BJ (cell line): ENCODE measurements at regions of chr12 and their contacts with region 1.

Region 1: DNA sequence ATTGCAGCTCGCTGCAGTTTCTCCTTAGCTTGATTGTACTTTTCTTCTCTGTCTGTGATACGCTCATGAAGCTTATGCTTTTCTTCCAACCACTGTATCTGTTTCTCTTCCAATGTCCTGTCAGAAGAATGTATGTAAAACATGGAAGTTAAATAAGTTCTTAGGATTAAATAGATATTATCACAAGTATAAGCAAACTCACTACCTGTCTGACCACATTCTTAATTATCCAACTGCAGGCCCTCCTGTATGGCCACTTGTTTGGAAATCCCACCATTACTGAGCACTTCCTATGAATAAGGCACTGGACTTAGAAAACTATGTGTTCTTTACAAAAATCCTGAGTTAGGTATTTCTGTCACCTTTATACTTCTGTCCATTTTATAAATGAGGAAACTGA is 128.0 kb downstream of the CEP83 start:
- DNase-seq: no peak
- H3K4me3 ChIP-seq: no peak overlapping the region
- H3K27me3 ChIP-seq: no peaks in the 10 kb centered on the region
- CTCF ChIP-seq: no peak

Region 2: GRCh38 chr12:94167756-94168416 is 163.8 kb before region 1 on chr12:
- CTCF ChIA-PET with region 1: no interaction called
- POLR2A ChIA-PET with region 1: interaction called, 15 read pairs
- DNase-seq: no peak
- H3K4me3 ChIP-seq: no peak overlapping the region
- H3K27me3 ChIP-seq: peaks cover 8% of the 10 kb centered on the region; the same call in 1 of the 2 replicates
- CTCF ChIP-seq: no peak

Region 3: DNA sequence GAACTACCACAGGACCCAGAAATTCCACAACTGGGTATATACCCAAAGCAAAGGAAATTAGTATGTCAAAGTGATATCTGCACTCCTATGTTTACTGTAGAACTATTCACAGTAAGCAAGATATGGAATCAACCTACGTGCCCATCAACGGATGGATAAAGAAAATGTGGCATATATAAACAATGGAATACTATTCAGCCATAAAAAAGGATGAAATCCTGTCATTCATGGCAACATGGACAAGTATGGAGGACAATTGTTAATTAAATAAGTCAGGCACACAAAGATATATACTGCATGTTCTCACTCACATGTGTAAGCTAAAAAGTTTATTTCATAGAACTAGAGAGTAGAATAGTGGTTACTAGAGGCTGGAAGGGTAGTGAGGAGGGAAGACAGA is 30.9 kb after region 1 on chr12:
- CTCF ChIA-PET with region 1: no interaction called
- POLR2A ChIA-PET with region 1: no interaction called
- DNase-seq: no peak
- H3K4me3 ChIP-seq: no peak overlapping the region
- H3K27me3 ChIP-seq: no peaks in the 10 kb centered on the region
- CTCF ChIP-seq: no peak